HepG2 (cell line): ENCODE measurements at regions of chr7 and their contacts with region 1.

Region 1: GRCh38 chr7:150356265-150356897 is 12.2 kb upstream of the REPIN1 start:
- DNase-seq: peak; percentile 49
- ATAC-seq: peak; percentile 20
- H3K4me3 ChIP-seq: no peak overlapping the region
- H3K27ac ChIP-seq: peak overlapping the region; percentile 72
- H3K4me1 ChIP-seq: peaks cover 61% of the 10 kb centered on the region
- H3K27me3 ChIP-seq: no peaks in the 10 kb centered on the region
- CTCF ChIP-seq: peak; percentile 66
- EP300 ChIP-seq: no peak
- POLR2A ChIP-seq: no peak
- RAD21 ChIP-seq: 0 out of 2 replicates have a peak, but pooled peaks have one; percentile 25

Region 2: DNA sequence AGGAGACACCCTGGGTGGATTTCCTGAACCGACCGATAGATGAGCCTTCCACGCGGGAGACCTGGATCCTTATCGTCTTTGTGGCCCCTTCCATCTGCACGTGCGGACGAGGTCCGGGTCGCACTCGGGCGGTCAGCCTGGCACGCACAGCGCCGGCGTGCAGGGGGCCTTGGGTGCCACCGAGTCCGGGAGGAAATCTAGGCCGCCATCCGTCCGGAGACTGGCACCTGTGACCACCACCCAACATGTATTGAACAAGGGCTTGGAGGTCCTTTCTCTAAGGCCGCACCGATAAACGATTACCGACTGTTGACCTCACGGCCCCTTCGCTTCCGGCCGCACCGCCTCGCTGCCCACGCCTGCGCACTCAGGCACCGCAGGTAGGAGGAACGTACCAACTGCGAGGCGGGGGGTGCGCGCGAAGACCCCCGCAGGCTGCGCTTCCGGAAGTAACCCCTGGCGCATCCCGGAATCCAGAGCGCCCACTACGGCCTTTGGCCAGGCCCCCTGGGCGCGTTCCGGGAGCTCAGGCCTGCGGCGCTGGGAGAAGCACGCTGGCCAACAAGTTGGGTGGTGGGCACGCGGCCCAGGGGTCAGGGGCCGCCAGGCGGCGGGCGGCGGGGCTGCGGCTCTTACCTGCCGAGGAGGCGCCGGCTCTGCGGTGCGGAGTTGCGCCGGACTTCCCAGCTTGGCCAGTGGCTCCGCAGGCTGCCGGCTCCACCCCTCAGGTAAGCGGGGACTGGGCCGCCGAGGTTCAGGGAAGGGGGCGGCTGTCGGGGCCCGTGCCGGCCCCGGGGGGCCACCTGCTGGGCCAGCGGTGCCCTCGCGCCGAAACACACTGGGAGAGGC is 33.3 kb before region 1 on chr7 and contains the starts of genes ACTR3C and LRRC61:
- CTCF ChIA-PET with region 1: no interaction called
- POLR2A ChIA-PET with region 1: interaction called, 5 read pairs
- in situ Hi-C with region 1: no loop called
- intact Hi-C with region 1: loop called (anchors 5 kb)
- DNase-seq: peak; percentile 74
- ATAC-seq: peak; percentile 82
- H3K4me3 ChIP-seq: peak within 1 kb of the TSS; percentile 74 to 81 (median 77)
- H3K27ac ChIP-seq: peak within 1 kb of the TSS; percentile 84
- H3K4me1 ChIP-seq: peaks cover 54% of the 10 kb centered on the region
- H3K27me3 ChIP-seq: no peaks in the 10 kb centered on the region; a peak in 1 of 5 replicates
- CTCF ChIP-seq: peak; percentile 34; the same call in 1 of the 2 replicates
- EP300 ChIP-seq: peak in 1 of 2 experiments; percentile 35; a peak in 1 of 4 replicates
- POLR2A ChIP-seq: peak; percentile 87 to 94
- RAD21 ChIP-seq: no peak; the same call in none of the 2 replicates
- total RNA-seq, gene ACTR3C: 4.1 and 7.5 TPM in 2 replicates
- total RNA-seq, gene LRRC61: 34.8 and 38.4 TPM in 2 replicates

Region 3: DNA sequence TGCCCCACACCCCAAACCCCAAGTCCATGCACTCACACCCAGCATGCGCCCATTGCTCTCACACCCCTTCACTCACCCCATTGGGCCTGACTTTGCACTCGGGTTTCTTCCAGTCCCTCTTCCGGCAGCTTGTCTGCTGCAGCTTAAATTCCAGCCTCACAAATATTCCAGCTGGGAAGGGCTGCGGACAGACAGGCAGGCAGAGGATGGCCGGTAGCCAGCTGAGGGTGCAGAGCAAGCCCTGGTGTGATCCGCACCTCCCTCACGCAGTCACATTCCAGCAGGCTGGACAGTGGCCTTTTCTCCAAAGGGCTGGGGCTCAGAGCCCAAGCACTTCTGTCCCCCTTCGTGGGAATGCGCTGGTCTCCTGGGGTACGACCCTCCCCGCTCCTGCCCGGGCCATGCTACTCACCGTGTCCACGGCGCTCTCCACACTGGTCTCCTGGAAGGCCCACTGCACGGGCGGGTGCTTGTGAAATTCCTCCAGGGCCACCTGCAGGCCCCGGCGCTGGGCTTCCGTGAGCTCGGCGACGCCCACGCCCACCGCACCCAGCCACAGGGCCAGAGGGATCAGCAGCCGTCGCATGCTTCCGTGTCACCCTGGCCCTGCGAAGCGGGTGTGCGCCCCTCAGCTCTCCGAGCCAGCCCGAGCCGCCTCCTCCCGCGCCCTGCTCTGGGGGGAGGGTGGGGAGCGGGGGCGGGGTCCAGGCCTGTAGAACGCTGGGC is 16.2 kb before region 1 on chr7:
- CTCF ChIA-PET with region 1: no interaction called
- POLR2A ChIA-PET with region 1: interaction called, 26 read pairs
- in situ Hi-C with region 1: no loop called
- intact Hi-C with region 1: no loop called
- DNase-seq: peak; percentile 56
- ATAC-seq: peak; percentile 71
- H3K4me3 ChIP-seq: peak overlapping the region; percentile 75 to 88 (median 86)
- H3K27ac ChIP-seq: peak overlapping the region; percentile 49
- H3K4me1 ChIP-seq: peaks cover 41% of the 10 kb centered on the region
- H3K27me3 ChIP-seq: no peaks in the 10 kb centered on the region; a peak in 1 of 5 replicates
- CTCF ChIP-seq: peak; percentile 17; the same call in 1 of the 2 replicates
- EP300 ChIP-seq: no peak
- POLR2A ChIP-seq: 0 out of 4 replicates have a peak, but pooled peaks of 1 of the 2 experiments have one; percentile 33
- RAD21 ChIP-seq: no peak; the same call in 1 of the 2 replicates

Region 4: GRCh38 chr7:150368096-150368883 is 11.9 kb after region 1 on chr7 and contains the start of gene REPIN1:
- CTCF ChIA-PET with region 1: no interaction called
- POLR2A ChIA-PET with region 1: interaction called, 58 read pairs
- in situ Hi-C with region 1: no loop called
- intact Hi-C with region 1: no loop called
- DNase-seq: peak; percentile 86
- ATAC-seq: peak; percentile 71
- H3K4me3 ChIP-seq: peak within 1 kb of the TSS; percentile 68 to 84 (median 82)
- H3K27ac ChIP-seq: peak within 1 kb of the TSS; percentile 100
- H3K4me1 ChIP-seq: peaks cover 35% of the 10 kb centered on the region
- H3K27me3 ChIP-seq: no peaks in the 10 kb centered on the region
- CTCF ChIP-seq: peak; percentile 26; the same call in 1 of the 2 replicates
- EP300 ChIP-seq: peak; percentile 43 to 49; a peak in 2 of 4 replicates
- POLR2A ChIP-seq: peak; percentile 50 to 72; a peak in 3 of 4 replicates
- RAD21 ChIP-seq: 0 out of 2 replicates have a peak, but pooled peaks have one; percentile 54
- total RNA-seq, gene REPIN1: 86.4 and 108 TPM in 2 replicates

Region 5: DNA sequence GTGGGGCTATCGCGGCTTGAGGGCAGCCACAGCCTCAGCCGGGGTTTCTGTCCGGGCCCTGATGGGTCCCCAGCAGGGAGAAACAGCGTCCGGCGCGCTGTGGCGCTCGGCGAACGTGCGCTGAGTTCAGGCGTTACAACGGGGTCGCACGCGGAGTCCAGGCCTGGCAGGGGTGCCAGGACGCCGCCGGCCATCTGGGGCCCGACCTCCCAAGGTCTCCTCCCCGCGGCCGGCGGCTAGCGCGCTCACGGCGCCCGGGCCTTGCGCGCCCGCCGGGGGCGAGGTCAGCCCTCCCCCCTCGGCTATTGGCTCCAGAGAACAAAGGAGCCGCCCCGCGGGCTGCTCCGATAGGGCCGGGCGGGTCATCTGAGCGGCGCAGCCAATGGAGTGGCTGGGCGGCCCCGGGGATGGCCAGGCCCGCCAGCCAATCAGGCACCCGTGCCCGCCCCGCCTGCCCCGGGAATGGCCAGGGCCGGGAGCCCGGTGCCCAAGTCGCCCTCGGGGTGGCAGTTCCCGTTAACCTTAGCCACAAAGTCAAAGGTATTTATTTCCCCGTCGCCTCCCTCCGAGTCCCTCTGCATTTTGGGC is 22.6 kb after region 1 on chr7 and contains the start of gene ZNF775:
- CTCF ChIA-PET with region 1: interaction called, 3 read pairs
- POLR2A ChIA-PET with region 1: interaction called, 17 read pairs
- in situ Hi-C with region 1: no loop called
- intact Hi-C with region 1: loop called (anchors 1 kb)
- DNase-seq: peak; percentile 90
- ATAC-seq: peak; percentile 83
- H3K4me3 ChIP-seq: peak within 1 kb of the TSS; percentile 88 to 92 (median 92)
- H3K27ac ChIP-seq: peak within 1 kb of the TSS; percentile 97
- H3K4me1 ChIP-seq: peaks cover 84% of the 10 kb centered on the region
- H3K27me3 ChIP-seq: no peaks in the 10 kb centered on the region
- CTCF ChIP-seq: peak; percentile 20
- EP300 ChIP-seq: no peak
- POLR2A ChIP-seq: peak; percentile 85 to 93
- RAD21 ChIP-seq: peak; percentile 45
- total RNA-seq, gene ZNF775: 3.1 and 4.5 TPM in 2 replicates

Region 6: DNA sequence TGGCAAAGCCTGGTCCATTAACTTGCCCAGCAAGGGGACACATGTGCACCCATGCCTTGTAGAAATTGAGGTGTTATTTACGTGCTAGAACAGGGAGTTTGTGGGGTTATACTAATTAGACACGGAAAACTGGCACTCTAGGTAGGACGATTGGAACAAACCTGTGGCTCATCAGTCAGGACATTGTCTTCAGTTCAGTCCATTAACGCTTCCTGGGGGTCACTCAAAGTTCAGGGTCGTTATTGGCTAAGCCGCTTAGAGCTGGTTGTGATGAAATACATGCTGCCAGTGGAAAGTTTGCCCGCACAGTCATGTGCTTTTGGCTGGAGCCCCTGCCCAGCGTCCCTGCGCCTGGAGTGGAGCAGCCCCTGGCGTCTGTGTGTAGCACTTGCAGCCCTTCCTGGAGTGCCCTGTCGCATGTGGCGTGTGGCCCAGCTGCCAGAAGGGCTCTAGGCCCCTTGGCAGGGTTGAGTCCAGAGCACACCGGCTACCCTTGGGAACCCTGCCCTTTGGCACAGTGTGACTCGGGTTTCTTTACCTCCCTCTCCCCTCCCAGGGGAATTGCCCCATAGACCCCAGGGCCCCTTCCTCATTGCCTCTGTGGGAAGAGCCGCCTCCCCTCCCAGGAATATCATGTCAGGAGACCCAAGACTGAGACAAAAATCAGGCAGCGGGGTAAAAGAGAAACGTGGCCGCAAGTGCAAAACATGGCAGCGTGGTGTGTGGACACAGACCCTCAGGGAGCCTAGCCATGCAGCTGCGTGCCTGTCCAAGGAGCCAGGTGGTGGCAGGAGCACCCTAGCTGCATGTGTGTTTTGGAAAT is 32.5 kb after region 1 on chr7:
- CTCF ChIA-PET with region 1: interaction called, 45 read pairs
- POLR2A ChIA-PET with region 1: interaction called, 17 read pairs
- in situ Hi-C with region 1: no loop called
- intact Hi-C with region 1: loop called (anchors 1 kb)
- DNase-seq: peak; percentile 98
- ATAC-seq: peak; percentile 93
- H3K4me3 ChIP-seq: no peak overlapping the region
- H3K27ac ChIP-seq: peak overlapping the region; percentile 86
- H3K4me1 ChIP-seq: peaks cover 55% of the 10 kb centered on the region
- H3K27me3 ChIP-seq: no peaks in the 10 kb centered on the region
- CTCF ChIP-seq: peak; percentile 100
- EP300 ChIP-seq: peak; percentile 94 to 95
- POLR2A ChIP-seq: peak in 1 of 2 experiments; percentile 35; a peak in 1 of 4 replicates
- RAD21 ChIP-seq: peak; percentile 100

Region 7: DNA sequence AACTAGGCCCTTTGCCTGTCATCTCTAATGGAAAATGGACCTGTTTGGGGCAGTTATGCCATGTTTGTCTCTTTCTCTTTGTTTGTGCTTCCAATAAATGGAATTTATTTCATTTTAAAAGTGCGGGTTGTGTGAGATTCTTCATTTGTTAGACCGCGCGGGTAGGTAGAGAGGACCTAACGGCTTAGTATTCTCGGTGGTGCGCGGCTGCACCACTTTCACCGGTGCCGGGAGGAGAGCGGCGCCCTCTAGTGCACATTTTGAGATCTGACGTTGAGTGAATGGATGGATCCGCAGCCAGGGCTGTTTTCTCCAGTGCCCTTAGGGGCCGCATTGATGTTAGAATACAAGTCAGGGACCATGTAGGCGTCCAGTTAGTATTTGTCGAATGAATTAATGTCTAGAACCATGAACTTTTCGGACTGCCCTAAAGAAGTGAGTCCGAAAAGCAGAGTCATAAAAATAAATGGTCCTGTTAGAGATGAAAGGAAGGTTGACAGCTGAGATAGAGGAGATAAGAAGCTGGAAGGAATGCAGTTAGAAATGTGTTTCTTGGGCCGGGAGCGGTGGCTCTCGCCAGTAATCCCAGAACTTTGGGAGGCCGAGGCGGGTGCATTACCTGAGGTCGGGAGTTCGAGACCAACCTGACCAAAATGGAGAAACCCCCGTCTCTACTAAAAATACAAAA is 64.8 kb after region 1 on chr7:
- CTCF ChIA-PET with region 1: interaction called, 10 read pairs
- POLR2A ChIA-PET with region 1: no interaction called
- in situ Hi-C with region 1: no loop called
- intact Hi-C with region 1: loop called (anchors 2 kb)
- DNase-seq: peak; percentile 70
- ATAC-seq: peak; percentile 99
- H3K4me3 ChIP-seq: peak overlapping the region; percentile 18 to 31 (median 30); a peak in 3 of 6 replicates
- H3K27ac ChIP-seq: no peak overlapping the region
- H3K4me1 ChIP-seq: peaks cover 16% of the 10 kb centered on the region
- H3K27me3 ChIP-seq: peaks cover 0 to 5% of the 10 kb centered on the region in 2 experiments; a peak in 1 of 5 replicates
- CTCF ChIP-seq: peak; percentile 91
- EP300 ChIP-seq: no peak
- POLR2A ChIP-seq: no peak
- RAD21 ChIP-seq: peak; percentile 85